ENCODE measurements at regions of chr17 and their contacts with region 1.

Region 1: GRCh38 chr17:82244413-82245140 is 15.7 kb downstream of the SLC16A3 start:
- DNase-seq: no peak
- H3K4me3 ChIP-seq: no peak overlapping the region
- H3K27ac ChIP-seq: no peak overlapping the region
- H3K4me1 ChIP-seq: peaks cover 33 to 47% of the 10 kb centered on the region in 2 donors
- H3K27me3 ChIP-seq: no peaks in the 10 kb centered on the region
- CTCF ChIP-seq: peak in 2 of 3 experiments; percentile 31 to 44

Region 2: GRCh38 chr17:82230627-82231311 is 13.8 kb before region 1 on chr17:
- intact Hi-C with region 1: loop called (anchors 2 kb)
- DNase-seq: peak in 1 of 2 donors; percentile 92
- H3K4me3 ChIP-seq: peak overlapping the region; percentile 55 to 70
- H3K27ac ChIP-seq: peak overlapping the region; percentile 79 to 85
- H3K4me1 ChIP-seq: peaks cover 10 to 20% of the 10 kb centered on the region in 2 donors
- H3K27me3 ChIP-seq: no peaks in the 10 kb centered on the region
- CTCF ChIP-seq: peak; percentile 38 to 84 (median 60)

Region 3: GRCh38 chr17:82267575-82268379 is 23.2 kb after region 1 on chr17:
- intact Hi-C with region 1: loop called (anchors 1 kb)
- DNase-seq: peak; percentile 91 to 97
- H3K4me3 ChIP-seq: peak overlapping the region; percentile 5 to 40
- H3K27ac ChIP-seq: peak overlapping the region; percentile 91 to 92
- H3K4me1 ChIP-seq: peaks cover 17 to 38% of the 10 kb centered on the region in 2 donors
- H3K27me3 ChIP-seq: no peaks in the 10 kb centered on the region
- CTCF ChIP-seq: no peak

Region 4: GRCh38 chr17:82292251-82293154 is 47.9 kb after region 1 on chr17:
- intact Hi-C with region 1: loop called (anchors 2 kb)
- DNase-seq: peak; percentile 95 to 98
- H3K4me3 ChIP-seq: peak overlapping the region; percentile 91 to 97
- H3K27ac ChIP-seq: peak overlapping the region; percentile 98 to 99
- H3K4me1 ChIP-seq: peaks cover 4 to 22% of the 10 kb centered on the region in 2 donors
- H3K27me3 ChIP-seq: no peaks in the 10 kb centered on the region
- CTCF ChIP-seq: no peak

Region 5: DNA sequence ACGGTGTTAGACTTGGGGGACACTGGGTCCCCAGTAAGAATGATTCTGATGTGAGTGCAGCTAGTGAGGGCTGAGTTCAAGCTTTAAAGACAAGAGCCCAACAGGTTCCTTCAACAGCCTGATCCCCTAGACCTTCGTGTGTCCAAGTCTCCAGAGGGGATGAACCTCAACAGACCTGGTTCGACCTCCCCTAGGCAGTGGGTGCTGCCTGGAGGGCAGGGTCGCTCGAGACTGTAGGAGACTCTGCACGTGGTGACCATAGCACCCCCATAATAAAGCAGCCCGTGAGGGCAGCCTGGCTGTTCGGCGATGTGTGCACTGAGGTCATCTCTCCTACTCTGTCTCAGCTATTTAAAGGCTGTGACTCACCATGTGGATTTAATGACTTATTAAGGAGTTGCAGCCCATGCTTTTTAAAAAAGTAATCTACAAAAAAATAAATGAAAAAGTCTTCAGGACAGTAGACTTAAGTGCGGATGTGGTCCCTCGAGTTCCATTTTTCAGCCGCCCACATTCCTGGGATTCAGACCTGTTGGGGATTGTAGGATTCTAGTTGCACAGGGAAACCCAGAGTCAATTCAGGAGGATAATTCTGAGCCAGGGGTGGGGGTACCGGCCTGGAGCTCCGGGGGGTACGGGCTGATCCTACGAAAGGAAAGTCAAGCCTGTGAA is 811.5 kb after region 1 on chr17:
- intact Hi-C with region 1: no loop called
- DNase-seq: peak in 1 of 2 donors; percentile 80
- H3K4me3 ChIP-seq: peak overlapping the region in 1 of 2 donors; percentile 46
- H3K27ac ChIP-seq: peak overlapping the region; percentile 46 to 83
- H3K4me1 ChIP-seq: peaks cover 5 to 23% of the 10 kb centered on the region in 2 donors
- H3K27me3 ChIP-seq: no peaks in the 10 kb centered on the region
- CTCF ChIP-seq: no peak